ENCODE measurements at regions of chr14 and their contacts with region 1.

Region 1: GRCh38 chr14:73753959-73754882 is 40.0 kb upstream of the PNMA1 start:
- DNase-seq: peak; percentile 67
- H3K4me3 Mint-ChIP-seq: peak overlapping the region; percentile 90
- H3K27ac Mint-ChIP-seq: peak overlapping the region; percentile 96
- H3K4me1 Mint-ChIP-seq: peaks cover 90% of the 10 kb centered on the region
- H3K27me3 Mint-ChIP-seq: no peaks in the 10 kb centered on the region

Region 2: GRCh38 chr14:72883961-72884360 is 870.3 kb before region 1 on chr14:
- CTCF ChIA-PET with region 1: no interaction called
- DNase-seq: peak; percentile 37
- H3K4me3 Mint-ChIP-seq: no peak overlapping the region
- H3K27ac Mint-ChIP-seq: no peak overlapping the region
- H3K4me1 Mint-ChIP-seq: peaks cover 39% of the 10 kb centered on the region
- H3K27me3 Mint-ChIP-seq: peaks cover 62% of the 10 kb centered on the region

Region 3: GRCh38 chr14:73825551-73826188 is 71.4 kb after region 1 on chr14:
- CTCF ChIA-PET with region 1: interaction called, 23 read pairs
- DNase-seq: peak; percentile 85
- H3K4me3 Mint-ChIP-seq: no peak overlapping the region
- H3K27ac Mint-ChIP-seq: no peak overlapping the region
- H3K4me1 Mint-ChIP-seq: peaks cover 8% of the 10 kb centered on the region
- H3K27me3 Mint-ChIP-seq: peaks cover 18% of the 10 kb centered on the region

Measured in activated naive CD4-positive, alpha-beta T cell treated with anti-CD3 and anti-CD28 coated beads, Interleukin-2, amount 10 ng/mL, durations not matched to agents 7 days and 5 days (primary cell).